SK-N-SH (cell line): ENCODE measurements at regions of chr6 and their contacts with region 1.

Region 1: DNA sequence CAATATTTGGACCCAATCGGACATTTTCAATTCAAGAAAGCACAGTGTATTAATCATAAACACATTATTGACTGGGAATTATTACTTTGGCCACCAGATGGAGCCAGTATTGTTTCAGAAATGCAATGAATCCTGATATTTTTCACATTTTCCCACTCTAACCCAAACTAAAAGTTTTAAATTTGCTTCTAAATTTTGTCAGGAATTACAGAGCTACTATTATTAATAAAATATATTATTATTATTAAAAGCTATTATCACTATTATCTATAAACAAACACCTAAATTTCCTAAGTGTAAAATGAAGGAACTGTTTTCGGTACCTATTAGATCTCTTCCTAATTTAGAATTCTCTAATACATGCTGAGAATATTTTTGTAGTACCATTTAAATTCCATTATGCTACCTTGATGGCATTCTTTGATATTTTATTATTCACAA is 245.3 kb downstream of the OGFRL1 start:
- DNase-seq: peak; percentile 34
- H3K4me3 ChIP-seq: no peak overlapping the region
- H3K27ac ChIP-seq: no peak overlapping the region
- H3K4me1 ChIP-seq: no peaks in the 10 kb centered on the region; a peak in 1 of 4 replicates
- H3K27me3 ChIP-seq: no peaks in the 10 kb centered on the region
- CTCF ChIP-seq: peak; percentile 74
- EP300 ChIP-seq: no peak
- RAD21 ChIP-seq: peak; percentile 70

Region 2: GRCh38 chr6:71523548-71523947 is 10.4 kb before region 1 on chr6:
- CTCF ChIA-PET with region 1: interaction called, 14 read pairs
- POLR2A ChIA-PET with region 1: no interaction called
- DNase-seq: no peak
- H3K4me3 ChIP-seq: no peak overlapping the region
- H3K27ac ChIP-seq: no peak overlapping the region
- H3K4me1 ChIP-seq: no peaks in the 10 kb centered on the region
- H3K27me3 ChIP-seq: no peaks in the 10 kb centered on the region
- CTCF ChIP-seq: no peak
- EP300 ChIP-seq: no peak
- RAD21 ChIP-seq: no peak

Region 3: DNA sequence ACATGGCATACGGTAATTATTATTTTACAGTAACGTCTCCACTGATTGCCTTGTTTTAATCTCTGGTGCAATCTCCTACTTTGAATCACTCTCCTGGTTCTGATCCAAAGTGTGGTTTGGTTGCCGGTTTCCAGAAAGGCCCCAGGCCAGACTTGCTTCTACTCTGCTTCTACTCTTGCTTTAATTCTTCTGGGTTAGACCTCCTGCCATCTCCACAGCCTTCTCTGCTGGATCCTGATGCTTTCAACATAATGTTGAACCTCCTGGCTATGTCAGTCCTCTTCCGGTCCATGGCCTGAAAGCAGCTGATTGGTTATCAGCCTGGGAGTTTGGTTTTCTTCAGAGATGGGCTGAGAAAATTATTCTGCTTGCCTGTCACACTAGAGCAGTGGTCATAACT is 85.9 kb after region 1 on chr6:
- CTCF ChIA-PET with region 1: no interaction called
- POLR2A ChIA-PET with region 1: no interaction called
- DNase-seq: no peak
- H3K4me3 ChIP-seq: no peak overlapping the region
- H3K27ac ChIP-seq: no peak overlapping the region
- H3K4me1 ChIP-seq: no peaks in the 10 kb centered on the region
- H3K27me3 ChIP-seq: peaks cover 6% of the 10 kb centered on the region; the same call in 1 of the 2 replicates
- CTCF ChIP-seq: no peak
- EP300 ChIP-seq: no peak
- RAD21 ChIP-seq: no peak

Region 4: DNA sequence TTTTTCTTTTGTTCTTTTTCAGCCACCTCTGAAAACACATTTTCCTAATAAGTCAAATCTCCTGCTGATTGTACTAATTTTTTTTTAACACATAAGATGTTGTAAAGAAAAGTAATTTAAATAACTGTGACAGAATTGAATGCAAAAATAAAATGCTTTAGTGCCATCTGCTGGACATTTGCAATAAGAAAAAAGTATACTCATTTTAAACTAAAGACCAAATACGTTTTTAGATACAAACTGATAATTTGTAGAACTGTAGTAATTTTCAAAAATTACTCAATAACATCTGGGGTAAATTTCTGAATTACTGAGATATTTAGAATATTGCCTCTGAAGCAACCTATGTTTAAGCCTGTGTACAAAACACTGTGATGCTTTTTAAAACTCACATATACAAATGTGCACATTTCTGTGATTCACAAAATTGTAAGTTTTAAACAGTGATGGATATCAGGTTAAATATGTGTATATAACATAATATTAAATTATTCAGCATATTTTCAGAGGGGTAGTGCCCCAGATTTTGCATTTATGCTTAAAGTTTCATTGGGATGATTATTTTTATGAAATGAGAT is 551.1 kb after region 1 on chr6:
- CTCF ChIA-PET with region 1: interaction called, 14 read pairs
- POLR2A ChIA-PET with region 1: no interaction called
- DNase-seq: no peak
- H3K4me3 ChIP-seq: no peak overlapping the region; a peak in 1 of 4 replicates
- H3K27ac ChIP-seq: no peak overlapping the region
- H3K4me1 ChIP-seq: no peaks in the 10 kb centered on the region; a peak in 1 of 4 replicates
- H3K27me3 ChIP-seq: peaks cover 9% of the 10 kb centered on the region; the same call in 1 of the 2 replicates
- CTCF ChIP-seq: peak; percentile 81
- EP300 ChIP-seq: no peak
- RAD21 ChIP-seq: peak; percentile 67